ENCODE measurements at regions of chr17 and their contacts with region 1.

Region 1: GRCh38 chr17:9729034-9729650 is 62.2 kb downstream of the DHRS7C start:
- DNase-seq: peak; percentile 74
- CTCF ChIP-seq: peak; percentile 96

Region 2: DNA sequence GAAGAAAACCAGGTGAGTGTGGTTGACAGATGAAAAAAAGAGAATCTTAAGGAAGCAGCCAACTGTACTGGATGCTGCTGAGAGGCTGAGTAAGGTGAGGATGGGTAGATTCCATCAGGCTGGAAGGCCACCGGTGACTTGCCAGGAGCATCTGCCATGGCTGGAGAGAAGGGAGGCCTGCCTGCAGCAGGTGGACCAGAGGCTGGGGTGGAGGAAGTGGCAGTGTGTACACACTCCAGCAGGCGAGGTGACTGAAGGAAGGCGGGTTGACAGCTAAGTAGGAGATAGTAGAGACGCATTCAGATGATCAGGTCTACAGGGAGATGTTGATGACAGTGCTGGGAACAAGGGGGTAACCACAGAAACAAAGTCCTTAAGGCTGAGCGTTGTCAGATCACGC is 14.3 kb before region 1 on chr17:
- CTCF ChIA-PET with region 1: interaction called, 17 read pairs
- POLR2A ChIA-PET with region 1: no interaction called
- DNase-seq: no peak
- CTCF ChIP-seq: no peak

Measured in GM10248 (cell line).